CD4-positive, alpha-beta T cell (primary cell): ENCODE measurements at regions of chr10 and their contacts with region 1.

Region 1: GRCh38 chr10:103888113-103888841 is 29.7 kb downstream of the STN1 start:
- DNase-seq: peak in 5 of 14 experiments; percentile 5 to 76 (median 73)
- ATAC-seq: peak; percentile 90
- H3K4me3 ChIP-seq: no peak overlapping the region
- H3K4me3 Mint-ChIP-seq: no peak overlapping the region
- H3K27ac ChIP-seq: no peak overlapping the region
- H3K27ac Mint-ChIP-seq: peak overlapping the region; percentile 35
- H3K4me1 ChIP-seq: peaks cover 26% of the 10 kb centered on the region
- H3K4me1 Mint-ChIP-seq: peaks cover 20% of the 10 kb centered on the region
- H3K27me3 ChIP-seq: no peaks in the 10 kb centered on the region
- H3K27me3 Mint-ChIP-seq: no peaks in the 10 kb centered on the region
- CTCF ChIP-seq: peak; percentile 86

Region 2: GRCh38 chr10:103918053-103918846 is 30.0 kb after region 1 on chr10 and contains the start of gene STN1:
- CTCF ChIA-PET with region 1: interaction called, 6 read pairs
- POLR2A ChIA-PET with region 1: interaction called, 5 read pairs
- intact Hi-C with region 1: loop called in 1 of 2 experiments (anchors 1 kb)
- DNase-seq: peak; percentile 88 to 97 (median 95)
- ATAC-seq: peak; percentile 93
- H3K4me3 ChIP-seq: peak within 1 kb of the TSS; percentile 83
- H3K4me3 Mint-ChIP-seq: peak within 1 kb of the TSS; percentile 94
- H3K27ac ChIP-seq: peak within 1 kb of the TSS; percentile 79 to 81
- H3K27ac Mint-ChIP-seq: peak within 1 kb of the TSS; percentile 93
- H3K4me1 ChIP-seq: peaks cover 56% of the 10 kb centered on the region
- H3K4me1 Mint-ChIP-seq: peaks cover 47% of the 10 kb centered on the region
- H3K27me3 ChIP-seq: no peaks in the 10 kb centered on the region
- H3K27me3 Mint-ChIP-seq: no peaks in the 10 kb centered on the region
- CTCF ChIP-seq: peak; percentile 20
- total RNA-seq, gene STN1: 13.0 to 13.4 TPM

Region 3: DNA sequence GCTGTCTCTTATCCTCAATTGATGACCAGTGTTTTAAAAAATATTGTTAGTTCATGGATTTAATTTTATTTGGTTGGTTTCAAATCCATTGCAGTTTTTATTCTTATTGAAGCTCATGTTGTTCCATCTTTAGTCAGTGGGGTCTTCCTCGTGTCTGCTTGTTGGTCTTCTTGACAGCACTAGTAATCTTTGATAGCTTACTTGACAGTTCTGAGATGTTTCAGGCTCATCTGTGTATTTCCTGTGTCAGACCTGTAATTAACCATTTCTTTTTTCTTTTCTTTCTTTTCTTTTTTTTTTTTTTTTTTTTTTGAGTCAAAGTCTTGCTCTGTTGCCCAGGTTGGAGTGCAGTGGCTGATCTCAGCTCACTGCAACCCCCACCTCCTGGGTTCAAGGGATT is 106.9 kb after region 1 on chr10:
- CTCF ChIA-PET with region 1: interaction called, 4 read pairs
- POLR2A ChIA-PET with region 1: no interaction called
- intact Hi-C with region 1: loop called in 1 of 2 experiments (anchors 5 kb)
- DNase-seq: no peak
- ATAC-seq: no peak
- H3K4me3 ChIP-seq: no peak overlapping the region
- H3K4me3 Mint-ChIP-seq: no peak overlapping the region
- H3K27ac ChIP-seq: no peak overlapping the region
- H3K27ac Mint-ChIP-seq: no peak overlapping the region
- H3K4me1 ChIP-seq: no peaks in the 10 kb centered on the region
- H3K4me1 Mint-ChIP-seq: peaks cover 24% of the 10 kb centered on the region
- H3K27me3 ChIP-seq: no peaks in the 10 kb centered on the region
- H3K27me3 Mint-ChIP-seq: no peaks in the 10 kb centered on the region
- CTCF ChIP-seq: no peak

Region 4: DNA sequence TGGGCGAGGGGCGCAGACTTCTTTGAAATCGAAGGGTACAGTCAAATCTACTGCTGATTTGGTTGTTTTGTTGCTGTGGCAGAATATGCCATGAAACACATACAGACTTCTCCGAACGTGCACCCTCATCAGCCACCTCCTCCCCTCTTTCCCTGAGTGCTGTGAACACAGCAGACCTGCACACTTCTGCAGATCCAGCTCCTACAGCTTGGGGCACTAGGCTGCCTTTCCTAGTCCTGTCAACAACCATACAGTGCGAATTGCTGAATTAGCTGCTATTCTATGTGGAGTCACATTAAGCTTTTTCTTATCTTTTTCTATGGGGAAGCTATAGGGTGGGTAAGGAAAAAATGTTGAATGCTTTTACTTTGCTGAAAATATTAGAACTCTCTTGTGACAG is 139.9 kb after region 1 on chr10:
- CTCF ChIA-PET with region 1: interaction called, 6 read pairs
- POLR2A ChIA-PET with region 1: interaction called, 3 read pairs
- intact Hi-C with region 1: loop called in 1 of 2 experiments (anchors 10 kb)
- DNase-seq: peak in 7 of 14 experiments; percentile 11 to 57 (median 23)
- ATAC-seq: peak; percentile 98
- H3K4me3 ChIP-seq: no peak overlapping the region
- H3K4me3 Mint-ChIP-seq: no peak overlapping the region
- H3K27ac ChIP-seq: no peak overlapping the region
- H3K27ac Mint-ChIP-seq: peak overlapping the region; percentile 50
- H3K4me1 ChIP-seq: no peaks in the 10 kb centered on the region
- H3K4me1 Mint-ChIP-seq: peaks cover 5% of the 10 kb centered on the region
- H3K27me3 ChIP-seq: no peaks in the 10 kb centered on the region
- H3K27me3 Mint-ChIP-seq: no peaks in the 10 kb centered on the region
- CTCF ChIP-seq: no peak

Region 5: DNA sequence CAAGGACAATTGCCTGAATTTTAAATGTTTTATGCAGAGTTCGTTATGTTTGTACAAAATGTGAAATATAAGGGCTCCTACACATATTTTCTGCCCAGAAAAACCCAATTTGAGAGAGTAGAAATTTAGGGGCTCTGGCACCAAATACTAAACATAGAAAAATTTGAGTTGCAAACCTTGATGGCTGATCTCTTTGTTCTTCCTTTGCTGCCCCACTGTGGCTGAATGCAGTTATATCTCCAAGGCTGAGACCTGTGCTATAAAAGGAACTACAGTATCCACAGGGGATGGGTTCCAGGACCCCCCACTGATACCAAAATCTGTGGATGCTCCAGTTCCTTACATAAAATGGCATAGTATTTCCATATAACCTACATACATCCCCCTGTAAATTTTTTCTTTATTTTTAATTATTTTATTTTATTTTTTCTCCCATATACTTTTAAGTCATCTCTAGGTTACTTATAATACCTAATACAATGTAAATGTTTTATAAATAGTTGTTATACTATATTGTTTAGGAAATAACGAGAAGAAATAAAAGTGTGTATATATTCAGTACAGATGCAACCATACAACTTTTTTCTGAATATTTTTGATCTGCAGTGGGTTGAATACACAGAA is 321.4 kb after region 1 on chr10:
- CTCF ChIA-PET with region 1: no interaction called
- POLR2A ChIA-PET with region 1: no interaction called
- intact Hi-C with region 1: loop called (anchors 1 kb)
- DNase-seq: peak in 13 of 14 experiments; percentile 7 to 67 (median 27)
- ATAC-seq: peak; percentile 60
- H3K4me3 ChIP-seq: no peak overlapping the region
- H3K4me3 Mint-ChIP-seq: no peak overlapping the region
- H3K27ac ChIP-seq: no peak overlapping the region
- H3K27ac Mint-ChIP-seq: no peak overlapping the region
- H3K4me1 ChIP-seq: no peaks in the 10 kb centered on the region
- H3K4me1 Mint-ChIP-seq: no peaks in the 10 kb centered on the region
- H3K27me3 ChIP-seq: no peaks in the 10 kb centered on the region
- H3K27me3 Mint-ChIP-seq: peaks cover 20% of the 10 kb centered on the region
- CTCF ChIP-seq: peak; percentile 70

Region 6: DNA sequence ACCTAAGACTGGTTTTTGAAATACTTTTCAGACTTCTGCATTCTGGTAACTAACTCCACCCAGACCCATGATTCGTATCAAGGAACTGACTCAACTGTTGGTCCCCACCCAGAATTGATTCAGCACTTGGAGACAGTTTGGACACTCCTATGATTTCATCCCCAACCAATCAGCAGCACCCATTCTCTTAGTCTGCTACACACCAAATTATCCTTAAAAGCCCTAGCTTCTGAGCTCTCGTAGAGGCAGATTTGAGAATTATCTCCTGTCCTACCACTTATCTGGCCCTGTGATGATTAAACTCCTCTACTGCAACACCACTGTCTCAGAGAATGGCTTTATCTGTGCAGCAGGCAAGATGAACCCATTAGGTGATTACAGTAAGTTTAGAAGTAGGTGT is 358.7 kb after region 1 on chr10:
- CTCF ChIA-PET with region 1: no interaction called
- POLR2A ChIA-PET with region 1: no interaction called
- intact Hi-C with region 1: no loop called
- DNase-seq: peak in 2 of 14 experiments; percentile 61 to 71
- ATAC-seq: no peak
- H3K4me3 ChIP-seq: no peak overlapping the region
- H3K4me3 Mint-ChIP-seq: no peak overlapping the region
- H3K27ac ChIP-seq: no peak overlapping the region
- H3K27ac Mint-ChIP-seq: no peak overlapping the region
- H3K4me1 ChIP-seq: no peaks in the 10 kb centered on the region
- H3K4me1 Mint-ChIP-seq: no peaks in the 10 kb centered on the region
- H3K27me3 ChIP-seq: no peaks in the 10 kb centered on the region
- H3K27me3 Mint-ChIP-seq: peaks cover 12% of the 10 kb centered on the region
- CTCF ChIP-seq: no peak